ENCODE measurements at regions of chr2 and their contacts with region 1.

Region 1: DNA sequence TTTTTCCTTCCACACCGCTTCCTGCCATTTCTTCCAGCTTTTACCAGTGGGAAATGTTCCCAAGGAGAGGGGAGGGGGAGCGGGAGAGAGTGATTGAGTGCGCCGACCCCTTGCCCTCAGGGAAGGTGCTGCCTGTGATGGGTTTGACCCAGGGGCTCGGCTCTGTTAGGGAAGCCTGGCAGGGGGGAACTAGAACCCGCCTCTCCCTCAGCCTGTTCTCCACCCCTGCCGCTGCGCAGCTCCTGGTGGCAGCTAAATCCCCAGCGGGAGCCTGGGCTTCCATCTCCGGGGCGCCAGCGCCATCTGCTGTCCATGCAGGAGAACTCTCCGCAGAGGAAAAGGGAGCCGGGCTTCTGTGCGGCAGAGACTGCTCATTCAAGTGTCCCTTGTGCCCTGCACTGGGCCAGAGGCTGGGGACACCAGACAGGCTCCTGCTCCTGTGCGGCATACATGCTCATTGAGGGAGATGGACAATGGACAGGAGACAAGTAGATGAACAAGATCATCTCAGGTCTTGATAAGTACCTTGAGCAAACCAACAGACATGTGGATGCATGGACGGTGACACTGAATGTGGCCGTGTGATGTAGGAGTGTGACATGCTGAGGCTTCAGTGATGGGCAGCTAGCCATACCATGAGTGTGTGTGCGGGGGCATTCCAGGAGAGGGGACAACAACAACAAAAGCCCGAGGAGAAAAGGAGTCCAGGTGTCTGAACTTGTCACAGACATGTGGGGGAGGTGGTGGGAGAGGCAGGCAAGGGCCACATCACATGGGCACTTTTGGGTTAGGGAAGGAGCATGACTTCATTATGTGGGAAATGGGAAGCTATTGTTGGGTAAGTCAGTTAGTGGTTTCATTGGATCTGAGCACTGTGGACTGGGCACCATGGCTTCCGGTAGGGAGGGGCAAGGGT is 13.3 kb downstream of the CHPF start:
- DNase-seq: peak; percentile 85 to 95
- H3K4me3 ChIP-seq: peak overlapping the region in 1 of 4 donors; percentile 14
- H3K27ac ChIP-seq: no peak overlapping the region
- H3K4me1 ChIP-seq: peaks cover 0 to 19% (median 11%) of the 10 kb centered on the region in 4 donors
- H3K27me3 ChIP-seq: peaks cover 0 to 77% (median 44%) of the 10 kb centered on the region in 3 donors
- CTCF ChIP-seq: peak in 6 of 7 experiments; percentile 62 to 98 (median 94)
- EP300 ChIP-seq: no peak
- POLR2A ChIP-seq: no peak

Region 2: DNA sequence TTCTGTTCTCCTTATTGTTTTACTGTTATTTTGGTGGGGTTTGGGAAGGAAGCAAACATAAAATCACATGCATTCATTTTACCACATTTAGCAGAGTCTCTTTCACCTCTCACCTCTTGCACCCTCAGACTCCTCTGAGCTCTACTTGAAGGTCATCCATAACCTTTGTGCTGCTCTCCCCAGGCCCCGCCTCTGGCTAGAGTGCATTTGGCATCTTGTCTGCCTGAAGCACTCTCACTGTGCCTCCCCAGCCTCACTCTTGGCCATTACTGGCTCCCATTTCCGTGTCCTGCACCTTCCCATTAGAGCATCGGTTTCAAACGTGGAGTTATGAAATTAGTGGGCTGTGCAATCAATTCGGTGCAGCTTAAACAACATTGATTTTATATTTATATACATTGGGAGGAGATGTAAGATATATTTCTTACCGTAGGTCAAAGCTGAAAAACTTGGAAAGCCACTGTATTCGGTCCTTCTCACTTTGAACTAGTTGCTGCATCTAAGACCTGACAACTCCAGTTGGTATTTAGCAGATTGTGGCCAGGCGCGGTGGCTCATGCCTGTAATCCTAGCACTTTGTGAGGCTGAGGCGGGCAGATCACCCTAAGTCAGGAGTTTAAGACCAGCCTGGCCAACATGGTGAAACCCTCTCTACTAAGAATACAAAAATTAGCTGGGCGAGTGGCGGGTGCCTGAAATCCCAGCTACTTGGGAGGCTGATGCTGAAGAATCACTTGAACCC is 330.7 kb before region 1 on chr2:
- intact Hi-C with region 1: no loop called
- DNase-seq: no peak
- H3K4me3 ChIP-seq: no peak overlapping the region
- H3K27ac ChIP-seq: no peak overlapping the region
- H3K4me1 ChIP-seq: peaks cover 0 to 9% (median 3%) of the 10 kb centered on the region in 4 donors
- H3K27me3 ChIP-seq: peaks cover 0 to 8% (median 0%) of the 10 kb centered on the region in 3 donors
- CTCF ChIP-seq: no peak
- EP300 ChIP-seq: no peak
- POLR2A ChIP-seq: no peak

Region 3: GRCh38 chr2:219402665-219403515 is 127.4 kb before region 1 on chr2:
- intact Hi-C with region 1: loop called (anchors 10 kb)
- DNase-seq: peak; percentile 64 to 92
- H3K4me3 ChIP-seq: no peak overlapping the region
- H3K27ac ChIP-seq: peak overlapping the region in 2 of 5 donors; percentile 79 to 93
- H3K4me1 ChIP-seq: peaks cover 22 to 60% (median 42%) of the 10 kb centered on the region in 4 donors
- H3K27me3 ChIP-seq: peaks cover 0 to 16% (median 0%) of the 10 kb centered on the region in 3 donors
- CTCF ChIP-seq: peak in 5 of 7 experiments; percentile 66 to 89 (median 85)
- EP300 ChIP-seq: no peak
- POLR2A ChIP-seq: no peak

Region 4: GRCh38 chr2:219475697-219476651 is 54.3 kb before region 1 on chr2:
- intact Hi-C with region 1: loop called (anchors 5 kb)
- DNase-seq: peak; percentile 80 to 90
- H3K4me3 ChIP-seq: peak overlapping the region in 1 of 4 donors; percentile 9
- H3K27ac ChIP-seq: peak overlapping the region in 2 of 5 donors; percentile 36 to 56
- H3K4me1 ChIP-seq: peaks cover 0 to 20% (median 9%) of the 10 kb centered on the region in 4 donors
- H3K27me3 ChIP-seq: peaks cover 0 to 45% (median 8%) of the 10 kb centered on the region in 3 donors
- CTCF ChIP-seq: peak in 5 of 7 experiments; percentile 56 to 87 (median 82)
- EP300 ChIP-seq: no peak
- POLR2A ChIP-seq: no peak

Region 5: DNA sequence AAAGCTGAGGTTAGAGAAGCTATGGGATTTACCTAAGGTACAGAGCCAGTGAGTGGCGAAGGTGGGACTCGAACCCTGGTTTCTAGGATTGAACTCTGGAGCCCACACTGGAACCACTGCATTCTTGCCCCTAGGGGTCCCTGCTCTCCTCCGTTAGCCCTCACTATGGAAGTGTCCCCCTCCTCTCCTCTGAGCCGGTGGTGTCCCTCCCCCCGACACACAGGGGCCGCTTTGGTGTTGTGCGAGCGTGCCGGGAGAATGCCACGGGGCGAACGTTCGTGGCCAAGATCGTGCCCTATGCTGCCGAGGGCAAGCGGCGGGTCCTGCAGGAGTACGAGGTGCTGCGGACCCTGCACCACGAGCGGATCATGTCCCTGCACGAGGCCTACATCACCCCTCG is 40.1 kb before region 1 on chr2:
- intact Hi-C with region 1: loop called (anchors 5 kb)
- DNase-seq: no peak
- H3K4me3 ChIP-seq: no peak overlapping the region
- H3K27ac ChIP-seq: peak overlapping the region in 1 of 5 donors; percentile 31
- H3K4me1 ChIP-seq: peaks cover 0 to 7% (median 2%) of the 10 kb centered on the region in 4 donors
- H3K27me3 ChIP-seq: peaks cover 0 to 78% (median 28%) of the 10 kb centered on the region in 3 donors
- CTCF ChIP-seq: no peak
- EP300 ChIP-seq: no peak
- POLR2A ChIP-seq: no peak